Transverse colon (tissue), 4 donors: ENCODE measurements at regions of chr3 and their contacts with region 1.

Region 1: GRCh38 chr3:112990672-112991602 is at the start of gene GTPBP8:
- DNase-seq: peak; percentile 95
- H3K4me3 ChIP-seq: peak within 1 kb of the TSS; percentile 60 to 91 (median 78)
- H3K27ac ChIP-seq: peak within 1 kb of the TSS; percentile 94 to 99 (median 97)
- H3K4me1 ChIP-seq: peaks cover 7 to 26% (median 13%) of the 10 kb centered on the region in 4 donors
- H3K27me3 ChIP-seq: no peaks in the 10 kb centered on the region
- CTCF ChIP-seq: peak in 2 of 5 experiments; percentile 11 to 12
- EP300 ChIP-seq: no peak
- POLR2A ChIP-seq: peak; percentile 98
- total RNA-seq, gene GTPBP8: 6.7 to 46.7 (median 17.6) TPM

Region 2: DNA sequence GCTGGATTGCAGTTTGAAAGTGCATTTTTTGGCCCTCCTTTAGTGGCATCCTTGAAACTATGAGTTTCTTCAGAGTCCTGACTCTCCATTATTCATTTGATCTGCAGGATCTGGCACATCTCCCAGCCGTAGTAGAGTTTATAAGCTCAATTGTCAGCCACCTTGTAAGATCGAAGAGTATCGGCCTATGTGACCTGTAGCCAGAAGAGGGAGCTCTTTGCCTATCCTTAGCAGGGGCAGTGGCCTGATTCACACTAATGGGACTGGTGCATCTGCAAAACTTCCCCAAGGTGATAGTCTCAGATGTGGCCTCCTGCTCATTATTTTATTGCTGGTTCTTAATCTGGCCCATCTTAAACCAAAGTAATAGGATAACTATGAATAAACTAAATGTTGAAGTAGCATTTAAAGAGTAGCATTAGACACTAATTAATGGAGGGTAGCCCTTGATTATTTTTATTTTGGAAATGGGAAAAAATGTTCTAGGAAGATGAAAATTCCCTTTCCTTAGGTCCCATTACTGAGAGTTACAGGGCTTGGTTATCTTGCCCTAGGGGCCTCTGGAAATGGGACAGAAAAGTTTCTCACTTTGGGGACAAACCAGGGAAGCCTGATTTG is 879.0 kb before region 1 on chr3:
- in situ Hi-C with region 1: loop called in 1 of 4 experiments (anchors 25 kb)
- intact Hi-C with region 1: no loop called
- DNase-seq: peak; percentile 60
- H3K4me3 ChIP-seq: no peak overlapping the region
- H3K27ac ChIP-seq: no peak overlapping the region
- H3K4me1 ChIP-seq: peaks cover 0 to 8% (median 1%) of the 10 kb centered on the region in 4 donors
- H3K27me3 ChIP-seq: no peaks in the 10 kb centered on the region
- CTCF ChIP-seq: peak; percentile 54 to 65 (median 64)
- EP300 ChIP-seq: no peak
- POLR2A ChIP-seq: no peak

Region 3: GRCh38 chr3:112561731-112562688 is 428.9 kb before region 1 on chr3 and contains the starts of genes ATG3 and SLC35A5:
- in situ Hi-C with region 1: loop called in 1 of 4 experiments (anchors 25 kb)
- intact Hi-C with region 1: no loop called
- DNase-seq: peak; percentile 99
- H3K4me3 ChIP-seq: peak within 1 kb of the TSS; percentile 69 to 96 (median 76)
- H3K27ac ChIP-seq: peak within 1 kb of the TSS; percentile 91 to 99 (median 96)
- H3K4me1 ChIP-seq: peaks cover 14 to 43% (median 26%) of the 10 kb centered on the region in 4 donors
- H3K27me3 ChIP-seq: no peaks in the 10 kb centered on the region
- CTCF ChIP-seq: peak in 2 of 5 experiments; percentile 5 to 35
- EP300 ChIP-seq: no peak
- POLR2A ChIP-seq: peak; percentile 96
- total RNA-seq, gene ATG3: 24.3 to 82.6 (median 52.8) TPM
- total RNA-seq, gene SLC35A5: 0.80 to 49.2 (median 25.4) TPM